ENCODE measurements at regions of chr20 and their contacts with region 1.

Region 1: GRCh38 chr20:40160097-40160550 is 528.9 kb downstream of the MAFB start:
- DNase-seq: peak; percentile 89
- H3K4me3 ChIP-seq: no peak overlapping the region
- H3K27ac ChIP-seq: no peak overlapping the region
- H3K4me1 ChIP-seq: no peaks in the 10 kb centered on the region
- H3K27me3 ChIP-seq: peaks cover 3% of the 10 kb centered on the region
- CTCF ChIP-seq: peak; percentile 86

Region 2: GRCh38 chr20:39946053-39946810 is 213.9 kb before region 1 on chr20:
- CTCF ChIA-PET with region 1: no interaction called
- POLR2A ChIA-PET with region 1: no interaction called
- intact Hi-C with region 1: no loop called
- DNase-seq: no peak
- H3K4me3 ChIP-seq: no peak overlapping the region
- H3K27ac ChIP-seq: no peak overlapping the region
- H3K4me1 ChIP-seq: no peaks in the 10 kb centered on the region
- H3K27me3 ChIP-seq: peaks cover 2% of the 10 kb centered on the region
- CTCF ChIP-seq: no peak

Region 3: GRCh38 chr20:40144581-40144980 is 15.5 kb before region 1 on chr20:
- CTCF ChIA-PET with region 1: no interaction called
- POLR2A ChIA-PET with region 1: no interaction called
- intact Hi-C with region 1: no loop called
- DNase-seq: no peak
- H3K4me3 ChIP-seq: no peak overlapping the region
- H3K27ac ChIP-seq: no peak overlapping the region
- H3K4me1 ChIP-seq: no peaks in the 10 kb centered on the region
- H3K27me3 ChIP-seq: no peaks in the 10 kb centered on the region
- CTCF ChIP-seq: no peak

Region 4: DNA sequence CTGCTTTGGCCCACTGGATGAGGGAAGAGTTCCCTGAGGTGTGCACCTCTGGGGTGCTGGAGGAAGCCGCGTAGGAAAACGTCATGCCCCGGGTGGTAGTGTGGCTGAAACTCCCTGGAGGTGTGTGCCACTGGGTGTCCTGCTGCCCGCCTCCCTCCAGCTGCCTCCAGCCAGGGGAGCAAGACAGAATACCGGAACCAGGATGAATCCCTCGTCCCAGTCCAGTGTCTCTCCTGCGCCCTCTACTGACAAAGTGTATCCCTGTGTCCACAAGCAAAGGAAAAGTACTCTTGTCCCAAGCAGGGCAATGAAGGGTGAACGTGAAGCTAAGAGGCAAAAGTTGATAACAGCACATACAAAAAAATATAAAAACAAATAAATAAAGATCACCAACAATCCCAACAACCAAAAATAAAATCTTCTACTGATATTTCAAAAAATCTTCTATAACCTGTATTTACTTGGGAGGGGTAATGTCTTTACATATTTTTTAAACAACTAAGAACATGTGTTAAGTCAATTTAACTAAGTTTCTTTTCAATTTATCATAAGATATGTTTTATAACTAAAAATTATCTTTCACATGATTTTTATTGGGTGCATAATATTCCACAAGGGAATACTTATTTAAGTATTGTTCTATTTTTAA is 91.3 kb after region 1 on chr20:
- CTCF ChIA-PET with region 1: interaction called, 4 read pairs
- POLR2A ChIA-PET with region 1: no interaction called
- intact Hi-C with region 1: loop called (anchors 5 kb)
- DNase-seq: peak; percentile 78
- H3K4me3 ChIP-seq: no peak overlapping the region
- H3K27ac ChIP-seq: no peak overlapping the region
- H3K4me1 ChIP-seq: peaks cover 15% of the 10 kb centered on the region
- H3K27me3 ChIP-seq: no peaks in the 10 kb centered on the region
- CTCF ChIP-seq: peak; percentile 79

Region 5: GRCh38 chr20:40875116-40876085 is 715.3 kb after region 1 on chr20:
- CTCF ChIA-PET with region 1: interaction called, 11 read pairs
- POLR2A ChIA-PET with region 1: no interaction called
- intact Hi-C with region 1: no loop called
- DNase-seq: no peak
- H3K4me3 ChIP-seq: no peak overlapping the region
- H3K27ac ChIP-seq: no peak overlapping the region
- H3K4me1 ChIP-seq: no peaks in the 10 kb centered on the region
- H3K27me3 ChIP-seq: peaks cover 7% of the 10 kb centered on the region
- CTCF ChIP-seq: no peak